B cell (primary cell): ENCODE measurements at regions of chr19 and their contacts with region 1.

Region 1: DNA sequence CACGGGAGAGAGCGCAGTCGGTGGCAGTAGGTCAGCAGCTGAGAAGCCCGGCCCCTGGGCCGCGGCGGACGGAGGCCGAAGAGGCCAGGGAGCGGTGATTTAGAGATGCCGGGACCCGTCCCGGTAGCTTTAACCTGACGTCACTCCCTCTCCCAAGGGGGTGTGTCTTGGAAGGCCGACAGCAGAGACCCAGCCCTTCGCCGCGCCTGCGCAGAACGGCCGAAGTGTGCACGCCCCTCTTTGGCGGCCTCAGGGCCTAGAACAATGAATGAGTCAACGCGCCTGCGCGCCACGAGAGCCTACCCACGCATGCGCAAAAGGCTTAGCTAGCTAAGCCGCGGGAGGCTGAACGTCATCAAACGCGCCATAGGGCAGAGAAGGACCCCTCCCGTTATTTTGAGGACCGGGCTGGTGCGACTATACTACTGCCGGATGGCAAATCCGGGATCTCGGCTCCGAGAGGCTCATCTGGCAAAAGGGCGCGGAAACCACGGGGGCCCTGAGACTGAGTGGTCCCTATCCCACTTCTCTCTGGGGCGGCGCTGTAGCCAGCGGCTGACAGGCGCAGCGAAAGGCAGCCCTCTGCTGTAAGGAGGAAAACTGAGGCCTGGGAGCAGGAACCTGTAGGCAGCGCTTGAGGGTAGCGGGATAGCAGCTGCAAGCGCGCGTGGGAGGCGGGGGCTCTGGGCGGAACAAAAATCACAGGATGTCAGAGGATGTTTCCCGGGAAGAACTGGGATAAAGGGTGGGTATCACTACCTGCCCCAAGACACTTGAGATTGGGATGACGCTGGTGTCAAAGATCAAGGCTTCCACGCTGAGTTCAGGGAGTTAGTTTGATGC is at the starts of genes IRGQ and ZNF576:
- DNase-seq: peak; percentile 100
- ATAC-seq: peak; percentile 88
- H3K4me3 ChIP-seq: peak within 1 kb of the TSS; percentile 61 to 88 (median 73)
- H3K4me3 Mint-ChIP-seq: peak within 1 kb of the TSS; percentile 98
- H3K27ac ChIP-seq: peak within 1 kb of the TSS; percentile 95 to 97
- H3K27ac Mint-ChIP-seq: peak within 1 kb of the TSS; percentile 99
- H3K4me1 ChIP-seq: peaks cover 16 to 38% of the 10 kb centered on the region in 2 donors
- H3K4me1 Mint-ChIP-seq: peaks cover 43% of the 10 kb centered on the region
- H3K27me3 ChIP-seq: no peaks in the 10 kb centered on the region
- H3K27me3 Mint-ChIP-seq: no peaks in the 10 kb centered on the region
- CTCF ChIP-seq: no peak
- total RNA-seq, gene IRGQ: 20.3 and 20.5 TPM in 2 replicates
- total RNA-seq, gene ZNF576: 17.3 and 23.2 TPM in 2 replicates

Region 2: GRCh38 chr19:43474986-43475705 is 121.1 kb before region 1 on chr19:
- CTCF ChIA-PET with region 1: no interaction called
- POLR2A ChIA-PET with region 1: no interaction called
- intact Hi-C with region 1: loop called (anchors 1 kb)
- DNase-seq: peak; percentile 98
- ATAC-seq: peak; percentile 98
- H3K4me3 ChIP-seq: peak overlapping the region; percentile 45 to 66 (median 52)
- H3K4me3 Mint-ChIP-seq: peak overlapping the region; percentile 90
- H3K27ac ChIP-seq: peak overlapping the region; percentile 50 to 84
- H3K27ac Mint-ChIP-seq: peak overlapping the region; percentile 92
- H3K4me1 ChIP-seq: peaks cover 4 to 13% of the 10 kb centered on the region in 2 donors
- H3K4me1 Mint-ChIP-seq: peaks cover 13% of the 10 kb centered on the region
- H3K27me3 ChIP-seq: no peaks in the 10 kb centered on the region
- H3K27me3 Mint-ChIP-seq: no peaks in the 10 kb centered on the region
- CTCF ChIP-seq: no peak

Region 3: GRCh38 chr19:43562698-43563241 is 33.5 kb before region 1 on chr19:
- CTCF ChIA-PET with region 1: interaction called, 126 read pairs
- POLR2A ChIA-PET with region 1: interaction called, 3 read pairs
- intact Hi-C with region 1: loop called (anchors 1 kb)
- DNase-seq: peak; percentile 93
- ATAC-seq: peak; percentile 85
- H3K4me3 ChIP-seq: peak overlapping the region in 3 of 5 experiments; percentile 7 to 45 (median 11)
- H3K4me3 Mint-ChIP-seq: peak overlapping the region; percentile 68
- H3K27ac ChIP-seq: peak overlapping the region; percentile 92
- H3K27ac Mint-ChIP-seq: peak overlapping the region; percentile 99
- H3K4me1 ChIP-seq: peaks cover 42 to 52% of the 10 kb centered on the region in 2 donors
- H3K4me1 Mint-ChIP-seq: peaks cover 56% of the 10 kb centered on the region
- H3K27me3 ChIP-seq: no peaks in the 10 kb centered on the region
- H3K27me3 Mint-ChIP-seq: no peaks in the 10 kb centered on the region
- CTCF ChIP-seq: no peak

Region 4: DNA sequence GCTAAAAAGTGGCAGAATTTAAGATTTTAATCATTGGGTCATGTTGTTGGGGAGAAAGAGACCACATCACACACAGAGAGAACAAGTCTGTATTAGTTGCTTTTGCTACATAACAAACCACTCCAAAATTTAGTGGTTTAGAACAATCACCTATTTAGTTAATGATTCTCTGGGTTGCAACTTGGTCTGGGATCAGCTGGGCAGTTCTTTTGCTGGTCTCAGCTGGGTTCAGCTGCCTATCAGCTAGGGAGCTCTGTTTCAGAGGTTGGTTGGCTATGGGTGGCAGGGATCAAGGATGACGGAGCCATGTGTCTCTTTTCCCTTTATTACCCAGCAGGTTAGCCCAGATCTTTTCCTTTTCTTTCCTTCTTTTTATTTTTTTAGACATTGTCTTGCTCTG is 11.7 kb before region 1 on chr19:
- CTCF ChIA-PET with region 1: interaction called, 14 read pairs
- POLR2A ChIA-PET with region 1: no interaction called
- intact Hi-C with region 1: no loop called
- DNase-seq: no peak
- ATAC-seq: no peak
- H3K4me3 ChIP-seq: no peak overlapping the region
- H3K4me3 Mint-ChIP-seq: no peak overlapping the region
- H3K27ac ChIP-seq: peak overlapping the region; percentile 0 to 66
- H3K27ac Mint-ChIP-seq: peak overlapping the region; percentile 77
- H3K4me1 ChIP-seq: peaks cover 29 to 66% of the 10 kb centered on the region in 2 donors
- H3K4me1 Mint-ChIP-seq: peaks cover 48% of the 10 kb centered on the region
- H3K27me3 ChIP-seq: no peaks in the 10 kb centered on the region
- H3K27me3 Mint-ChIP-seq: no peaks in the 10 kb centered on the region
- CTCF ChIP-seq: no peak

Region 5: DNA sequence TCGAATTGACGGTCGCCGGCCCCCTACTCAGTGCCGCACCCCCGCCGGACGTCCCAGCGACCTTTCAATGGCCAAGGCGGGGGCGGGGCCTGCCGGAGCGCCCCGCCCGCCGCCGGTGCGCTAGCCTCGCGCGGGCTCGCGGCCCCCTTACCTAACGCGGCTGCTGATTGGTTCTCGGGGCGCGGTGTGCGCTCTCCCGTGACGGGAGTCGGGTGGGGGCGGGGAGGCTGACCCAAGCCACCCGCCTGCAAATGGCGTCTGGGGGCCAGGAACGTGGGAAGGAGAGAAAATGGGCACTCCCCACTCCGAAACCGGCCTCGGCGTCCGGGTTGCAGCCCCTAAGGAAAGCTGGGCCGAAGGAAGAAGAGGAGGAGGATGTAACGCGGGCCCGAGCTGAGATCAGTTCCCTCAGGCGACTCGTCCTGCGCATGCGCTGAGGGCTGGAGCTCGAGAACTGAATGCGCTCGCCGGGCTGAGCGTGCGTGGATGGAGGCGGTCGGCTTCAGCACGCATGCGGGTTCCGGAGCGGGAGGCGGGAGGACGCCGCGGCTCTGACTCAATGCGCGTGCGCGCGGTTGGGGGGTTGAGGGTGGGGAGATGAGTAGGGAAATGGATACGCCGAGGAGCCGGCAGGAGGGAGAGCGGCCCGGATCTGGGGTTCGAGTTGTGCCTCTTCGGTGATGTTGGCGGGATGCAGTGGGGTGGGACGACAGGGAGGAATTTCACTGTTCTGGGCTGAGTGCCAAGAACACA is 158.5 kb after region 1 on chr19 and contains the start of gene SMG9:
- CTCF ChIA-PET with region 1: no interaction called
- POLR2A ChIA-PET with region 1: no interaction called
- intact Hi-C with region 1: loop called (anchors 1 kb)
- DNase-seq: peak; percentile 99
- ATAC-seq: peak; percentile 81
- H3K4me3 ChIP-seq: peak within 1 kb of the TSS; percentile 63 to 88 (median 84)
- H3K4me3 Mint-ChIP-seq: peak within 1 kb of the TSS; percentile 99
- H3K27ac ChIP-seq: peak within 1 kb of the TSS; percentile 93 to 98
- H3K27ac Mint-ChIP-seq: peak within 1 kb of the TSS; percentile 100
- H3K4me1 ChIP-seq: peaks cover 27 to 58% of the 10 kb centered on the region in 2 donors
- H3K4me1 Mint-ChIP-seq: peaks cover 71% of the 10 kb centered on the region
- H3K27me3 ChIP-seq: no peaks in the 10 kb centered on the region
- H3K27me3 Mint-ChIP-seq: no peaks in the 10 kb centered on the region
- CTCF ChIP-seq: no peak
- total RNA-seq, gene SMG9: 87.5 and 89.9 TPM in 2 replicates